B cell (primary cell): ENCODE measurements at regions of chr17 and their contacts with region 1.

Region 1: GRCh38 chr17:45277216-45277849 is 15.4 kb upstream of the SPATA32 start:
- DNase-seq: peak; percentile 91
- ATAC-seq: peak; percentile 94
- H3K4me3 ChIP-seq: no peak overlapping the region
- H3K4me3 Mint-ChIP-seq: no peak overlapping the region
- H3K27ac ChIP-seq: peak overlapping the region in 1 of 2 donors; percentile 48
- H3K27ac Mint-ChIP-seq: no peak overlapping the region
- H3K4me1 ChIP-seq: peaks cover 4 to 5% of the 10 kb centered on the region in 2 donors
- H3K4me1 Mint-ChIP-seq: peaks cover 6% of the 10 kb centered on the region
- H3K27me3 ChIP-seq: no peaks in the 10 kb centered on the region
- H3K27me3 Mint-ChIP-seq: no peaks in the 10 kb centered on the region
- CTCF ChIP-seq: peak; percentile 77

Region 2: DNA sequence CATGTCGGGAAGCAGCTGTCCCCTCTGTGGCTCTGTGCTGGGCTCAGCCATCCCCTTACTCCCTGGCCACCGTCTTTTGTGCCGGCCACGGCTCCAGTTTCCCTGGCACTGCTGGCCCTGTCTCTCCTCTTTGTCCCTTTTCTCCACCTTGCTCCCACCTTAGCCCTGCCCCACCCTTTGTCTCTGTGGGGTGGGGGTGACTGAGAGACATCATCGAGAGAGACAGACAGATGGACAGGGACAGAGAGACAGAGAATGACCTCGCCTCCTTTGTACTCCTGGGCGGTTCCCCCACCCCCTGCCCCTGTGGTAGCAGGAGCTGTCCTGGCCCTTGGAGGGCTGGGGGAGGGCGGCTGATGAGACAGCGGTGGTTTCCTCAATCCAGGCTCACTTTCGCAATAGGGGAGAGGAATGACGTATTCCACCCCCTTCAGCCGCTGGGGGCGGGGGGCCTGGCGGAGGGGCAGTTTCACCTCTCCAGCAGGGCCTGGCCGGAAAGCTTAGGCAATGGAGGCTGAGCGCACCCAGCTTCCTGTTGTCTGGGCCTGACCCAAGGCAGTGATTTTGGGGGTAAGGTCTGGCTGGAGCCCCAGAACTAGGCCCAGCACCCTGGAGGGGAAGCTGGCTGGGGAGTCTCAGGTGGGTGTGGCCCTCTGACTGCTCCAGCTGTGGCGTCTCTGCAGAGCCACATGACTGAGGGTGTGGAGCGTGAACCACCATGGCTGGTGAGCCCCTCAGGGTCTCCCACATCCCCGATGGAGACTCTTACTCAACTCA is 48.4 kb before region 1 on chr17:
- CTCF ChIA-PET with region 1: interaction called, 13 read pairs
- POLR2A ChIA-PET with region 1: no interaction called
- intact Hi-C with region 1: no loop called
- DNase-seq: peak; percentile 94
- ATAC-seq: peak; percentile 52
- H3K4me3 ChIP-seq: peak overlapping the region; percentile 8 to 96 (median 90)
- H3K4me3 Mint-ChIP-seq: peak overlapping the region; percentile 100
- H3K27ac ChIP-seq: peak overlapping the region; percentile 99 to 100
- H3K27ac Mint-ChIP-seq: peak overlapping the region; percentile 99
- H3K4me1 ChIP-seq: peaks cover 70 to 90% of the 10 kb centered on the region in 2 donors
- H3K4me1 Mint-ChIP-seq: peaks cover 95% of the 10 kb centered on the region
- H3K27me3 ChIP-seq: no peaks in the 10 kb centered on the region
- H3K27me3 Mint-ChIP-seq: no peaks in the 10 kb centered on the region
- CTCF ChIP-seq: no peak

Region 3: DNA sequence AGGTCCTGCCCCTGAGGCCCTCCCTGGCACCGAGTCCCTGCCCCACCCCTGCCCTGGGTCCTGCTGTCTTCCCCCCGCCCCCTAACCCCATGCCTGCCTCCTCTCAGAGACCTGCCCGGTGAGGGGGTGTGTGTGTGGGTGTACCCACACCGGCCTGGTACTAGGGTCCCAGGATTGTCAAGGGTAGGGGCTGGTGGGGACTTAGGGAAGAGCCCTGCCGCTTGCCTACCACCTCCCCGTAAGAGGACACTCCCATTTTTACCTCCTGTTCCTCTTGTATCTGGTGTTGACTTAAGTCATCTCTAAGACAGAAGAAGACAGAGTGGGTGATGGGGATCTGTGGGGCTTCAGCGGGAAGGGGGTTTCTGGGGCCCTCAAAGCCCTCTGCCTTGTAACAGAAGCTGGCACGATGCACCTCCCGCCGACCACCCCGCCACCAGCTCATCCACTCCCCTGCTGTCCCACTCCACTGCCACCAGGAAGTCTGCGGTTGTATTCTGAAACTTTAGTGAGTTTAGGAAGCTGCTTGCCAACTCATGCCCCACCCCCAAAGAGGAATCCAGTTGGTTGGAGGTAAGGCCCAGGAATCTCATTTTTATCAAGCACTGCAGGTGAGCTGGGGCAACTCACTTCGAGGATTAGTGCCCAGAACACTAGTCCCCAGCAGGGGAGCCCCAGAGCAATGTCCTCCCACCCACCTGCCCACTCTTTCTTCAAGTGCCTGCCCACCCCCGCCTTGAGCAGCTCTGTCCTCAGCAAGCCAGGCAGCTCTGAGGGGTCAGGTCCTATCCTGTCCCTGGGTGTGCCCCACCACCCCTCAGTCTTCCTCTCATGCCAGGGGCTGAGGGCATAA is 21.0 kb before region 1 on chr17:
- CTCF ChIA-PET with region 1: interaction called, 20 read pairs
- POLR2A ChIA-PET with region 1: interaction called, 10 read pairs
- intact Hi-C with region 1: no loop called
- DNase-seq: no peak
- ATAC-seq: no peak
- H3K4me3 ChIP-seq: no peak overlapping the region
- H3K4me3 Mint-ChIP-seq: no peak overlapping the region
- H3K27ac ChIP-seq: no peak overlapping the region
- H3K27ac Mint-ChIP-seq: no peak overlapping the region
- H3K4me1 ChIP-seq: peaks cover 5 to 9% of the 10 kb centered on the region in 2 donors
- H3K4me1 Mint-ChIP-seq: peaks cover 8% of the 10 kb centered on the region
- H3K27me3 ChIP-seq: no peaks in the 10 kb centered on the region
- H3K27me3 Mint-ChIP-seq: no peaks in the 10 kb centered on the region
- CTCF ChIP-seq: no peak

Region 4: GRCh38 chr17:45307290-45308015 is 30.1 kb after region 1 on chr17:
- CTCF ChIA-PET with region 1: interaction called, 207 read pairs
- POLR2A ChIA-PET with region 1: interaction called, 7 read pairs
- intact Hi-C with region 1: no loop called
- DNase-seq: peak; percentile 81
- ATAC-seq: peak; percentile 68
- H3K4me3 ChIP-seq: peak overlapping the region in 2 of 5 experiments; percentile 21 to 25
- H3K4me3 Mint-ChIP-seq: peak overlapping the region; percentile 85
- H3K27ac ChIP-seq: peak overlapping the region; percentile 81 to 90
- H3K27ac Mint-ChIP-seq: peak overlapping the region; percentile 98
- H3K4me1 ChIP-seq: peaks cover 90 to 95% of the 10 kb centered on the region in 2 donors
- H3K4me1 Mint-ChIP-seq: peaks cover 82% of the 10 kb centered on the region
- H3K27me3 ChIP-seq: no peaks in the 10 kb centered on the region
- H3K27me3 Mint-ChIP-seq: no peaks in the 10 kb centered on the region
- CTCF ChIP-seq: no peak

Region 5: GRCh38 chr17:45364531-45365390 is 87.4 kb after region 1 on chr17:
- CTCF ChIA-PET with region 1: interaction called, 29 read pairs
- POLR2A ChIA-PET with region 1: no interaction called
- intact Hi-C with region 1: no loop called
- DNase-seq: no peak
- ATAC-seq: no peak
- H3K4me3 ChIP-seq: no peak overlapping the region
- H3K4me3 Mint-ChIP-seq: no peak overlapping the region
- H3K27ac ChIP-seq: no peak overlapping the region
- H3K27ac Mint-ChIP-seq: no peak overlapping the region
- H3K4me1 ChIP-seq: no peaks in the 10 kb centered on the region
- H3K4me1 Mint-ChIP-seq: peaks cover 2% of the 10 kb centered on the region
- H3K27me3 ChIP-seq: peaks cover 0 to 35% (median 6%) of the 10 kb centered on the region in 4 experiments
- H3K27me3 Mint-ChIP-seq: peaks cover 44% of the 10 kb centered on the region
- CTCF ChIP-seq: no peak

Region 6: GRCh38 chr17:45794840-45795239 is 517.5 kb after region 1 on chr17:
- CTCF ChIA-PET with region 1: no interaction called
- POLR2A ChIA-PET with region 1: no interaction called
- intact Hi-C with region 1: no loop called
- DNase-seq: no peak
- ATAC-seq: no peak
- H3K4me3 ChIP-seq: no peak overlapping the region
- H3K4me3 Mint-ChIP-seq: no peak overlapping the region
- H3K27ac ChIP-seq: no peak overlapping the region
- H3K27ac Mint-ChIP-seq: no peak overlapping the region
- H3K4me1 ChIP-seq: no peaks in the 10 kb centered on the region
- H3K4me1 Mint-ChIP-seq: peaks cover 2% of the 10 kb centered on the region
- H3K27me3 ChIP-seq: peaks cover 0 to 8% (median under 1%) of the 10 kb centered on the region in 4 experiments
- H3K27me3 Mint-ChIP-seq: peaks cover 56% of the 10 kb centered on the region
- CTCF ChIP-seq: no peak